ENCODE measurements at regions of chr12 and their contacts with region 1.

Region 1: GRCh38 chr12:59431266-59431665 is 164.6 kb upstream of the SLC16A7 start:
- DNase-seq: no peak
- H3K4me3 ChIP-seq: no peak overlapping the region
- H3K27ac ChIP-seq: no peak overlapping the region
- H3K4me1 ChIP-seq: no peaks in the 10 kb centered on the region
- H3K27me3 ChIP-seq: no peaks in the 10 kb centered on the region
- CTCF ChIP-seq: peak; percentile 36

Region 2: DNA sequence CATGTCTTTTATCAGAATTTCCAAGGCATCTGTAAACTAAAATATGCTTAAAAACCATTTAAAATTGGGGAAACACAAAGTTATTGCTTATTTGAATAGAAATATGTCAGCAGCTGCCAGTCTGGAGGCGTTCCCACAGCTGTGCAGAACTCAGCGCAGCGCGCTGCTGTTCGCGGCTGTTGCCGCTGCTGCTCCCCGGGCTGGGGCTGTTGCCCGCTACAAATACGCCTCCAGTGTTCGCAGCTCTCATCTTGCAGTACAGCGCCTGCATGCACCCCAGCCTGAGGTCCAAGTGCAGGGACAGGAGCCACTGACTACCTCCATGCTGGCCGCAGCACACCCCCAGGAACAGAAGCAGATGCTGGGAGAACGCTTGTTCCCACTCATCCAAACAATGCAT is 380.7 kb after region 1 on chr12:
- intact Hi-C with region 1: loop called (anchors 10 kb)
- DNase-seq: no peak
- H3K4me3 ChIP-seq: no peak overlapping the region
- H3K27ac ChIP-seq: no peak overlapping the region
- H3K4me1 ChIP-seq: no peaks in the 10 kb centered on the region
- H3K27me3 ChIP-seq: no peaks in the 10 kb centered on the region
- CTCF ChIP-seq: no peak

Region 3: GRCh38 chr12:60184107-60184506 is 752.8 kb after region 1 on chr12:
- intact Hi-C with region 1: no loop called
- DNase-seq: no peak
- H3K4me3 ChIP-seq: no peak overlapping the region
- H3K27ac ChIP-seq: no peak overlapping the region
- H3K4me1 ChIP-seq: no peaks in the 10 kb centered on the region
- H3K27me3 ChIP-seq: no peaks in the 10 kb centered on the region
- CTCF ChIP-seq: no peak

Measured in left ventricle myocardium inferior (tissue), 1 donor.